Naive thymus-derived CD8-positive, alpha-beta T cell (primary cell): ENCODE measurements at regions of chr1 and their contacts with region 1.

Region 1: DNA sequence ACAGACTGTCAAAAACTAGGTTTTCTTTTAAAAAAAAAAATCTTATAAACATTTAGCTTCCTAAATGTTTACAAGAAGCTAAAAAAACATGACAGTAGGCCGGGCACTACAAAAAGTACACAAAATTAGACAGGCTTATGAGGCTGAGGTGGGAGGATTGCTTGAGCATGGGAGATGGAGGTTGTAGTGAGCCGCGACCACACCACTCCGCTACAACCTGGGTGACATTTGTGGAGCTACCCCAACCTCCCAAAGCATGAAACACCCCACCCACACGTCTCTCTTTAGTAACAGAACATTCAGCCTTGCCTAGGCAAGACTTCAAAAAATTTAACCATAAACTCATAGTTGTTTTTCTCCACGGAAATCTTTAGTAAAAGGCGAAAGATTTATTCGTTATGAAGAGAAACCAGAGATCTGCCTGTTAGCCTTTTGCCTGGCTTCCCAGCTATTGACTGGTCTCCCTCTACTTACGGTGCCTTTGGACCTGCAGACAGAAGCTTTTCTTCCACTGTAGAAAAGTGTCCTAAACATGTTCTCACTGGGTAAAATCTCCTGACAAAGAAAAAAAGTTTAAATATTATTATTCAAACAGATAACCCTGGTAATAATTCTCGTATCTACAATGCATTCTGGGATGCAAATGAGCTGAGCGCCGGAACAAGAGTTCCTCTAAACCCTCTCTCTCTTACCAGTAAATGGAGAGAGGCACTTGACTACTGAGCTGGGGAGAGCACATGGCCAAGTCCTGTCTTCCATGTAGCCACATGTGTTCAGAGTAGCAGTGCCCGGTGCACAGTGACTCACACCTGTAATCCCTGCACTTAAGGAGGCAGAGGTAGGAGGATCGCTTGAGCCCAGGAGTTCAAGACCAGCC is 9.2 kb downstream of the RNU5D-1 start:
- DNase-seq: peak; percentile 17 to 85 (median 74)
- ATAC-seq: peak; percentile 84 to 90
- H3K4me3 Mint-ChIP-seq: peak overlapping the region; percentile 42 to 85 (median 79)
- H3K27ac Mint-ChIP-seq: peak overlapping the region; percentile 93 to 99 (median 96)
- H3K4me1 Mint-ChIP-seq: peaks cover 50 to 80% (median 78%) of the 10 kb centered on the region in 4 donors
- H3K27me3 Mint-ChIP-seq: no peaks in the 10 kb centered on the region

Region 2: GRCh38 chr1:44696789-44697345 is 24.9 kb before region 1 on chr1:
- POLR2A ChIA-PET with region 1: interaction called, 13 read pairs
- DNase-seq: peak in 9 of 10 donors; percentile 17 to 72 (median 45)
- ATAC-seq: peak; percentile 99 to 100
- H3K4me3 Mint-ChIP-seq: peak overlapping the region; percentile 30 to 75 (median 69)
- H3K27ac Mint-ChIP-seq: peak overlapping the region; percentile 86 to 94 (median 92)
- H3K4me1 Mint-ChIP-seq: peaks cover 11 to 37% (median 24%) of the 10 kb centered on the region in 4 donors
- H3K27me3 Mint-ChIP-seq: peaks cover 0 to 3% (median 0%) of the 10 kb centered on the region in 5 donors

Region 3: DNA sequence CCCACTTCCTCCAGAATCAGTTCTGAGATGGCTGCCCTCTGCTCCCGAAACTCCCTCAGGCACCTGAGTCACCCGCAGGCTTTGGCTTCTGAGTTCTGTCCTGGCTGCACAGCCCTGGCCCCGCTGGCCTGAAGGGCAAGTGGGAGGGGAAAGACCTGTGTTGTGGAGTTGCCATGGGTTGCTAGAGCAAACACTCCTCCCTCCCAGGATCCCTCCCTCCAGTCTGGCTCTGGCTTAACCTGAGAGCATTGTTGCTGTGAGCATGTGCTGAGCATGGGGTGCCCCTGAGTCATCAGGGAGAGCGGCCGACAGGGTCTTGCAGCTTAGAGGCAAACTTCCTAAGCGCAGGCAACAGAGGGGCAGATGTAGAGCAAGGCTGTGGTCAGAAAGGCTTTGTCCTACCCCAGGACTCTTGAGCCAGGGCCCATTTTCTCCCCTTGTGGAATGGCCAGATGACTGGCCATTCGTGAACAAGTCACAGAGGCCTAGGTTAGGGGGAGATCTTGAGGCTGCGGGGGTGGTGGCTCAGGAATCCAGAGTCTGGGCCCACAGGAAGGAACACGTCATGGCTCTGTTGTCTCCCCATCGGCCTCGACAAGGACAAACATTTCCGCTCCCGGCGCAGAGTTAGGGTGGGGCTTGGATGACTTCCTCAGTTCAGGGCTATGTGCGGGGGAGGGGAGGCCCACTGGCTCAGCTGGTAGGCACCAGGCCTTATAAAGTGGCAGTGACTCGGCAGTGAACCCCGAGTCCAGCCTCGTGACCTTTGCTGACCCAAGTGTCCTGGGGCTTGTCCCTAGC is 85.7 kb after region 1 on chr1 and contains the start of gene DYNLT4:
- POLR2A ChIA-PET with region 1: interaction called, 30 read pairs
- DNase-seq: peak; percentile 72 to 96 (median 90)
- ATAC-seq: peak; percentile 56 to 69
- H3K4me3 Mint-ChIP-seq: peak within 1 kb of the TSS; percentile 40 to 91 (median 78)
- H3K27ac Mint-ChIP-seq: peak within 1 kb of the TSS; percentile 98 to 100 (median 99)
- H3K4me1 Mint-ChIP-seq: peaks cover 42 to 87% (median 81%) of the 10 kb centered on the region in 4 donors
- H3K27me3 Mint-ChIP-seq: no peaks in the 10 kb centered on the region
- polyA plus RNA-seq, gene DYNLT4: 0.24 to 0.86 TPM in 2 of 3 donors, not detected in the other

Region 4: DNA sequence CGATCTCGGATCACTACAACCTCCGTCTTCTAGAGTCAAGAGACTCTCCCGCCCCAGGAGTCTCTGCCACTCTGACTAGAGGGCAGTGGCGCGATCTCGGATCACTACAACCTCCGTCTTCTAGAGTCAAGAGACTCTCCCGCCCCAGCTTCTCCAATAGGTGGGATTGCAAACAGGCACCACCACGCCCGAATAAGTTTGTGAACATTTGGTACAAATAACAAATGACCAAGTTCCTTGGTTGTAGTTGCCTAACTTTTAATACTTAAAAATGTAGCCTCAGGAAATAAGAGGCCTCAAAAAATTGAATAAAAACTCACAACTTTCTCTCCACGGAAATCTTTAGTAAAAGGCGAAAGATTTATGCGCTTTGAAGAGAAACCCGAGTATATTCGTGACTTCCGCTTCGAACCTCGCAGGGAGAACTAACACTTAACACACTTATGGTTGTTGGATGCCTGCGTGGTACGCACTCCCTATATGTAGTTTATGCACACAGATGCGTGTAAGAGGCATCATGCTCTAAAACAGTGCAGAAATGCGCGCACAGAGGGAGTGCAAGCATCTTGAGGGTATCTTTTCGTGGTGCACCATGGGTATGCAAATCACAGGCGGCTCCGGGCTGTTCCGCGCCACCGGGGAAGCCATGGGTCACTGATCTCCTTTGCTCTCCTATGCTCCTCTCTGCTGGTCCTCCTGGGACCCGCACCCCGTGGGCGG is 98.0 kb after region 1 on chr1:
- POLR2A ChIA-PET with region 1: interaction called, 34 read pairs
- DNase-seq: peak; percentile 61 to 98 (median 80)
- ATAC-seq: peak; percentile 78 to 79
- H3K4me3 Mint-ChIP-seq: peak overlapping the region; percentile 92 to 97 (median 94)
- H3K27ac Mint-ChIP-seq: peak overlapping the region; percentile 100
- H3K4me1 Mint-ChIP-seq: peaks cover 23 to 55% (median 42%) of the 10 kb centered on the region in 4 donors
- H3K27me3 Mint-ChIP-seq: no peaks in the 10 kb centered on the region